Calu3 (cell line): ENCODE measurements at regions of chr15 and their contacts with region 1.

Region 1: DNA sequence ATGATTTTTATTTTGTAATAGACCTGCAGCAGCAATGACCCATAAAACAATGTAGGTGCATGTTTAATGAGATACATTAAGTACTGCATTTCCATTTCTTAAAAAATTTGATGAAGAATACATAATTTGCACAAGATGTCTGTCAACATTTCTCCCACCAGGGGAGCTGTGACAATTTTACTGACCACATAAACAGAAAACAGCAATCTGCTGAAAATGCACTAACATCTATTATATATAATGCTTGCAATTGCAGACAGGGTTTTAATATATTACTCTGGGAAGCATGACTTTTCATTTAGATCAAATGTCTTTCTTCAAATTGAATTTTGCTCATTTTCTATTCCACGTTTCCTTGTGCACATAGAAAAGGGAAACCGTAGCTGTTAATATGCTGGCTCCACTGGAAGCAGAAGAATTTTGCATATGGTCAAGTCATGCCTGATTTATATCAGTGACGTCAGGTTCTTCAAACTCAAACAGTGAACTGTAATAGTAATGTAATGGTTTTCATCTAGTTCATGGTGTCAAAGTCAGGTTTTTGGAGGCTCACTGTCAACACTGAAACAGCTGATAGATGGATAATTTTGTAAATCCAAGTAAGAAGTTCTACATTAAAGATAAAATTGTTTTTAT is 79.8 kb upstream of the IGF1R start:
- DNase-seq: no peak
- H3K4me3 Mint-ChIP-seq: no peak overlapping the region
- H3K27ac Mint-ChIP-seq: no peak overlapping the region
- H3K4me1 Mint-ChIP-seq: no peaks in the 10 kb centered on the region
- H3K27me3 Mint-ChIP-seq: peaks cover 34% of the 10 kb centered on the region
- CTCF ChIP-seq: peak; percentile 58

Region 2: DNA sequence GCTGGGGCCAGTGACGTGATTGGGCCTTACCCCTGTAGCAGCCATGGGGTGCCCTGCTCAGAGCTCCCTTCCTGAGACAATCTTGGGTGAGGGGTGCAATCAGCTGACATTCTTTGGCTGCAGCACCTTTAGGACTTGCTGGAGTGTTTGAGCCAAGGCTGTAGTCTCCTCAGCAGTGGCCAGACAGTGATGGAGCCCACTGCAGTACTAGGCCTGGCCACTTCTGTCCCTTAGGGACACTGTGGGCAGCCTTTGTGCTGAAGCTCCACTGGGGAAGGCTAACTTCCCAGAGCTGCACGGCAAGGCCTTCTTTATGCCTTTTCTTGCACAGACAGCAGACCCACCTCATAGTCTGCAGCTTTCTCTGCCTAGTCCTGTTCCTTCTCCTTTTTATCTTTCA is 205.1 kb before region 1 on chr15:
- CTCF ChIA-PET with region 1: no interaction called
- intact Hi-C with region 1: no loop called
- DNase-seq: no peak
- H3K4me3 Mint-ChIP-seq: no peak overlapping the region
- H3K27ac Mint-ChIP-seq: no peak overlapping the region
- H3K4me1 Mint-ChIP-seq: no peaks in the 10 kb centered on the region
- H3K27me3 Mint-ChIP-seq: no peaks in the 10 kb centered on the region
- CTCF ChIP-seq: no peak

Region 3: GRCh38 chr15:98532063-98532462 is 36.4 kb before region 1 on chr15:
- CTCF ChIA-PET with region 1: no interaction called
- intact Hi-C with region 1: loop called (anchors 1 kb)
- DNase-seq: no peak
- H3K4me3 Mint-ChIP-seq: no peak overlapping the region
- H3K27ac Mint-ChIP-seq: no peak overlapping the region
- H3K4me1 Mint-ChIP-seq: no peaks in the 10 kb centered on the region
- H3K27me3 Mint-ChIP-seq: peaks cover 86% of the 10 kb centered on the region
- CTCF ChIP-seq: no peak